Activated CD4-positive, alpha-beta memory T cell treated with anti-CD3 and anti-CD28 coated beads for 36 hours (primary cell): ENCODE measurements at regions of chr17 and their contacts with region 1.

Region 1: GRCh38 chr17:3012926-3013581 is 50.4 kb downstream of the OR1D5 start:
- DNase-seq: peak; percentile 71
- H3K4me3 Mint-ChIP-seq: no peak overlapping the region
- H3K27ac Mint-ChIP-seq: no peak overlapping the region
- H3K4me1 Mint-ChIP-seq: no peaks in the 10 kb centered on the region
- H3K27me3 Mint-ChIP-seq: no peaks in the 10 kb centered on the region

Region 2: DNA sequence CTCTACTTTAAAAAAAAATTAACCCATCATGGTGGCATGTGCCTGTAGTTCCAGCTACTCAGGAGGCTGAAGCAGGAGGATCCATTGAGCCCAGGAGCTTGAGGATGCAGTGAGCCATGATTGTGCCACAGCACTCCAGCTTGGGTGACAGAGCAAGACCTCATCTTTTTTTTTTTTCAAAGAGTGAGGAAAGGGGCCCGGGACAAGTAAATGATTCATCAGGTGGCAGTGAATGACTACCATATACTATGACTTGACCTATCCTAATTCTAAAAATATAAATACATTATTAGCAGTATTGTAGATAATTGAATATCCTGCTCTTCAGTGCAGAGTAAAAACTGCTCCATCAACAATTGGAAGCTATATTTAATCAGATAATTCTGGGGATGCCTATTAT is 356.8 kb before region 1 on chr17:
- CTCF ChIA-PET with region 1: no interaction called
- POLR2A ChIA-PET with region 1: no interaction called
- intact Hi-C with region 1: no loop called
- DNase-seq: no peak
- H3K4me3 Mint-ChIP-seq: no peak overlapping the region
- H3K27ac Mint-ChIP-seq: no peak overlapping the region
- H3K4me1 Mint-ChIP-seq: peaks cover 45% of the 10 kb centered on the region
- H3K27me3 Mint-ChIP-seq: no peaks in the 10 kb centered on the region

Region 3: GRCh38 chr17:2828397-2829038 is 184.5 kb before region 1 on chr17:
- CTCF ChIA-PET with region 1: interaction called, 59 read pairs
- POLR2A ChIA-PET with region 1: no interaction called
- intact Hi-C with region 1: loop called (anchors 1 kb)
- DNase-seq: peak; percentile 87
- H3K4me3 Mint-ChIP-seq: peak overlapping the region; percentile 7
- H3K27ac Mint-ChIP-seq: no peak overlapping the region
- H3K4me1 Mint-ChIP-seq: peaks cover 21% of the 10 kb centered on the region
- H3K27me3 Mint-ChIP-seq: no peaks in the 10 kb centered on the region

Region 4: GRCh38 chr17:2853111-2853721 is 159.8 kb before region 1 on chr17:
- CTCF ChIA-PET with region 1: interaction called, 87 read pairs
- POLR2A ChIA-PET with region 1: interaction called, 3 read pairs
- intact Hi-C with region 1: loop called (anchors 1 kb)
- DNase-seq: peak; percentile 50
- H3K4me3 Mint-ChIP-seq: peak overlapping the region; percentile 41
- H3K27ac Mint-ChIP-seq: no peak overlapping the region
- H3K4me1 Mint-ChIP-seq: peaks cover 14% of the 10 kb centered on the region
- H3K27me3 Mint-ChIP-seq: peaks cover 11% of the 10 kb centered on the region

Region 5: DNA sequence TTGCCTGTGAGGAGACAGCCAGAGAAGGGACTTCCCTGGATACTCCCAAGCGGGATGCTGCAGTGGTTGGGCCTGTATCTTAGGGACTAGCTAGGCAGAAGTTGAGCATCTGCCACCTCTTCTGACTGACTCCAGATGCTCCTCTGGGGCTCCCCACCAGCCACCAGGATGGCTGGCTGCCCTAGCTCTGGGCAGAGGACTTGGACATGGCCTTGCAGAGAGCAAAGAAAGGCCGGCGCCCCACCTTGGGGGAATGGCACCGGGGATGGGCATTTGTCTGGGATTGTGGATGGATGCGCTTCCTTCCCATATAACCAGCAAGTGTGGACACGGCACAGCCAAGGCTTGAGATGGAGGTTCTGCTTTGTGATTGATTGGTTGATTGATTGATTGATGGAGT is 18.6 kb before region 1 on chr17:
- CTCF ChIA-PET with region 1: interaction called, 10 read pairs
- POLR2A ChIA-PET with region 1: no interaction called
- intact Hi-C with region 1: no loop called
- DNase-seq: no peak
- H3K4me3 Mint-ChIP-seq: no peak overlapping the region
- H3K27ac Mint-ChIP-seq: no peak overlapping the region
- H3K4me1 Mint-ChIP-seq: no peaks in the 10 kb centered on the region
- H3K27me3 Mint-ChIP-seq: no peaks in the 10 kb centered on the region